ENCODE measurements at regions of chr6 and their contacts with region 1.

Region 1: DNA sequence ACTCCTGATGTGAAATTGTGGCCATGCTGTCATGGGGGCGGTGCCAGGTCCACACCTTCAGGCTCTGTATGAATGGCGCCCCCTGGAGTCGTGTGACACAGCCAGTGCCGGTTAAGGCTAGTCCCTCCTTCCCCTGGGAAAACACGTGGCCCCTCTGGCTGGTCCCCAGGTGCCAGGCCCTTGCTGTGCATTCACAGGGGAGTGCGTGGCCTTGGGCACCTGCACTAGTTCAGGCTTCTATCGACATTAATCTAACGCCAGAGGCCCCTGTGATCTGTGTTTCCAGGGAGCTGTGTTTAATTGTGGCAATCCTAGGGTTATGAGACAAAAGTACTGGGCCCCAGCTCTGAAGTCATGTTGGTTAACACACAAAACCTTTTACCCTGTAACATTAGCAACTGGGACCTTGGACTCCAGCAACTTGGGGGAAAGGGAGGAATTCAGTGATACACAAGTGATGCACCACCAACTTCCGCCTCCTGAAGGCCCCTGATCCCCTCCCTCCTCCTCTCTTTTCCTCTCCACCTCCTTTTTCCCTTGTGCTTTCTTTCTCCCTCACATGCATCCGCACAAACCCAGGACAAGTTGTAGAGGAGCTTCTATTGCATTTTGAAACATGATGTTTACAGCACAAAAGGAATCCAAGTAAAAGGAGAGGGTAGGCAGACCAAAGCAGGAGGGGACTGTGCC is 74.0 kb downstream of the SSR1 start:
- DNase-seq: no peak
- ATAC-seq: peak; percentile 74
- H3K4me3 ChIP-seq: no peak overlapping the region
- H3K27ac ChIP-seq: peak overlapping the region; percentile 38
- H3K4me1 ChIP-seq: peaks cover 71% of the 10 kb centered on the region
- H3K27me3 ChIP-seq: no peaks in the 10 kb centered on the region
- CTCF ChIP-seq: peak; percentile 71 to 87 (median 79)
- EP300 ChIP-seq: no peak
- POLR2A ChIP-seq: peak; percentile 41; the same call in 1 of the 2 replicates
- RAD21 ChIP-seq: peak; percentile 56

Region 2: GRCh38 chr6:6676910-6677441 is 562.1 kb before region 1 on chr6:
- CTCF ChIA-PET with region 1: interaction called, 36 read pairs
- POLR2A ChIA-PET with region 1: no interaction called
- RAD21 ChIA-PET with region 1: interaction called, 33 read pairs
- SMC1A ChIA-PET with region 1: interaction called, 33 read pairs
- in situ Hi-C with region 1: loop called (anchors 5 kb)
- intact Hi-C with region 1: loop called (anchors 2 kb)
- DNase-seq: peak; percentile 66
- ATAC-seq: peak; percentile 94
- H3K4me3 ChIP-seq: no peak overlapping the region
- H3K27ac ChIP-seq: 0 out of 2 replicates have a peak overlapping the region, but pooled peaks have one; percentile 20
- H3K4me1 ChIP-seq: peaks cover 8% of the 10 kb centered on the region
- H3K27me3 ChIP-seq: no peaks in the 10 kb centered on the region
- CTCF ChIP-seq: peak; percentile 91 to 97 (median 95); a peak in 5 of 6 replicates
- EP300 ChIP-seq: no peak
- POLR2A ChIP-seq: no peak
- RAD21 ChIP-seq: peak; percentile 96

Region 3: DNA sequence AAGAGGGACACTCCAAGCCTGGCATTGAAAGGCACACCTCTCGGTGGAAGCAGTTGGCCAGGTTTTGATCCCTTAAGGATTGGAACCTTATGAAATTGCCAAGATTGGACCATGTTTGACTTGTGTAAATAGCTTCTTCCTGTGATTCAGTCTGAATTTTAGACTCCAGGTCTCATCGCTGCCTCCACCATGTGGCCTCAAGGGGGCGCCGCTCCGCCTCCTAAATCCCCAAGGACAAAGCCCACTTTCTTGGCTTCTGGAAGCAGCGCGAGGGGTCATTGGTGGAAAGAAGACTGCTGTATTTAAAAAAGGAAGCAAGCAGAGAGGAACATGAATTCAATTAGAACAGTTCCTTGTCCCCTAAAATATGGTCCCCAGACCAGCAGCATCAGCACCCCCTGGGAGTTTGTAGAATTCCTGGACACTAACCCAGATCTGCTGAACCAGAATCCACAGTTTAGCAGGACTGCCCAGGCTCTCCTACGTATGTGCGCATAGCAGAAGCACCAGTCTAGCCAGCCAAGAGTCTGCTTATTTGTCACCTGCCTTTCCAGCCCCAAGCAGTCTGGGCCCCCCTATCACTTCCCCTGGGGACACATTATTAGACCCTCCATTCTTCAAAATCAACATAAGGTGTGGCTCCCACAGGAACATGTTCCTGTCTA is 542.0 kb before region 1 on chr6:
- CTCF ChIA-PET with region 1: interaction called, 16 read pairs
- POLR2A ChIA-PET with region 1: no interaction called
- RAD21 ChIA-PET with region 1: interaction called, 8 read pairs
- SMC1A ChIA-PET with region 1: interaction called, 4 read pairs
- in situ Hi-C with region 1: no loop called
- intact Hi-C with region 1: no loop called
- DNase-seq: no peak
- ATAC-seq: peak; percentile 71
- H3K4me3 ChIP-seq: no peak overlapping the region
- H3K27ac ChIP-seq: no peak overlapping the region
- H3K4me1 ChIP-seq: no peaks in the 10 kb centered on the region
- H3K27me3 ChIP-seq: no peaks in the 10 kb centered on the region; a peak in 1 of 4 replicates
- CTCF ChIP-seq: peak; percentile 53 to 80 (median 66)
- EP300 ChIP-seq: no peak
- POLR2A ChIP-seq: no peak
- RAD21 ChIP-seq: peak; percentile 75

Region 4: GRCh38 chr6:6758915-6759654 is 480.0 kb before region 1 on chr6:
- CTCF ChIA-PET with region 1: interaction called, 36 read pairs
- POLR2A ChIA-PET with region 1: no interaction called
- RAD21 ChIA-PET with region 1: interaction called, 10 read pairs
- SMC1A ChIA-PET with region 1: interaction called, 14 read pairs
- in situ Hi-C with region 1: no loop called
- intact Hi-C with region 1: no loop called
- DNase-seq: peak; percentile 13
- ATAC-seq: peak; percentile 97
- H3K4me3 ChIP-seq: no peak overlapping the region
- H3K27ac ChIP-seq: no peak overlapping the region
- H3K4me1 ChIP-seq: peaks cover 7% of the 10 kb centered on the region
- H3K27me3 ChIP-seq: no peaks in the 10 kb centered on the region
- CTCF ChIP-seq: peak; percentile 55 to 65 (median 57)
- EP300 ChIP-seq: 0 out of 4 replicates have a peak, but pooled peaks of 1 of the 2 experiments have one; percentile 29
- POLR2A ChIP-seq: no peak
- RAD21 ChIP-seq: peak; percentile 70

Region 5: DNA sequence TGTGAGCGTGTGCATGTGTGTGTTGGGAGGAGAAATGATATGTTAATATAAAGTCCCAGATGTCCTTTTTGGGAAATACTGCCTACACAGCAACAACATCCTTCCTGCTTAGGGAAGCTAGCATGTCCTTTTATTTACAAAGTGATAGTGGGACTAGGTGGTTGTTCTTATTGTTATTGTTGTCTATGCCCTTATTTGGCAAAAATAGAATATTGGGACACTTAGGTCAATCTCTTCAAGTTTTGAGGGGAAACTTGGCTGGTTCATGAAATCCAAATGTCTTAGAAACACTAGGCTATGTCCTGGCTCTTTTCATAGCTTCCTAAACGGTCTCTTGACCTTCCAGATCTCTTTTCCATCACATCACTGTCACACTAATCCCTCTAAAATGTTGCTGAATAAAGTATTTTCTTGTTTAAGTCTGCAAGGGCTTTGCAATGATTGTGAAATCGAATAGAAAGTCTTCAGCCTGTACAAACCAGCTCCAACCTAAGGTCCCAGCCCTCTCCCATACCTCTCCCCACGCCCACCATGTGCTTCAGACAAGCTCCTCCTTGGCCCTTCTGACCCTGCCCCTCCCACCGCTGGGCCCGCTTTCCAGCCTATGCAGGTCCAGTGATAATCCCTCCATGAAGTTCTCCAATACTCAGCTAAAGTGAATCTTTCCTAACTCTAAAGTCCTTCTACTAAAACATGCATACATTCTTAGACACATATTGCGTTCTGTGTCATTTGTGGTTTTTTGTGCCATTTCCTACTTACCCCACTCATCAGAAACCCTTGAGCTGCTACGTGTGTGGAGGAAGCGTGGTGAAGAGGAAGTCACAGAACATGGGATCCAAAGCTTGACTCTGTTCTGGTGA is 445.4 kb before region 1 on chr6:
- CTCF ChIA-PET with region 1: interaction called, 7 read pairs
- POLR2A ChIA-PET with region 1: interaction called, 6 read pairs
- RAD21 ChIA-PET with region 1: interaction called, 6 read pairs
- SMC1A ChIA-PET with region 1: interaction called, 5 read pairs
- in situ Hi-C with region 1: no loop called
- intact Hi-C with region 1: loop called (anchors 5 kb)
- DNase-seq: no peak
- ATAC-seq: no peak
- H3K4me3 ChIP-seq: no peak overlapping the region
- H3K27ac ChIP-seq: no peak overlapping the region
- H3K4me1 ChIP-seq: peaks cover 28% of the 10 kb centered on the region
- H3K27me3 ChIP-seq: no peaks in the 10 kb centered on the region
- CTCF ChIP-seq: no peak
- EP300 ChIP-seq: no peak
- POLR2A ChIP-seq: no peak
- RAD21 ChIP-seq: no peak

Region 6: GRCh38 chr6:7107578-7108195 is 131.4 kb before region 1 on chr6 and contains the start of gene RREB1:
- CTCF ChIA-PET with region 1: interaction called, 10 read pairs
- POLR2A ChIA-PET with region 1: interaction called, 3 read pairs
- RAD21 ChIA-PET with region 1: interaction called, 7 read pairs
- SMC1A ChIA-PET with region 1: interaction called, 5 read pairs
- in situ Hi-C with region 1: no loop called
- intact Hi-C with region 1: loop called (anchors 5 kb)
- DNase-seq: no peak
- ATAC-seq: peak; percentile 76
- H3K4me3 ChIP-seq: peak within 1 kb of the TSS; percentile 97
- H3K27ac ChIP-seq: peak within 1 kb of the TSS; percentile 94
- H3K4me1 ChIP-seq: peaks cover 5% of the 10 kb centered on the region
- H3K27me3 ChIP-seq: no peaks in the 10 kb centered on the region
- CTCF ChIP-seq: no peak
- EP300 ChIP-seq: no peak
- POLR2A ChIP-seq: peak; percentile 33
- RAD21 ChIP-seq: peak; percentile 1; the same call in 1 of the 2 replicates
- polyA plus RNA-seq, gene RREB1: 1.9 to 2.1 TPM

Region 7: GRCh38 chr6:7154341-7155139 is 84.5 kb before region 1 on chr6:
- CTCF ChIA-PET with region 1: interaction called, 13 read pairs
- POLR2A ChIA-PET with region 1: interaction called, 4 read pairs
- RAD21 ChIA-PET with region 1: interaction called, 11 read pairs
- SMC1A ChIA-PET with region 1: interaction called, 25 read pairs
- in situ Hi-C with region 1: no loop called
- intact Hi-C with region 1: loop called (anchors 5 kb)
- DNase-seq: peak; percentile 80
- ATAC-seq: peak; percentile 84
- H3K4me3 ChIP-seq: peak overlapping the region; percentile 58; the same call in 1 of the 2 replicates
- H3K27ac ChIP-seq: peak overlapping the region; percentile 93
- H3K4me1 ChIP-seq: peaks cover 80% of the 10 kb centered on the region
- H3K27me3 ChIP-seq: no peaks in the 10 kb centered on the region
- CTCF ChIP-seq: no peak
- EP300 ChIP-seq: peak; percentile 88 to 92; a peak in 3 of 4 replicates
- POLR2A ChIP-seq: peak; percentile 51; the same call in 1 of the 2 replicates
- RAD21 ChIP-seq: no peak

Region 8: DNA sequence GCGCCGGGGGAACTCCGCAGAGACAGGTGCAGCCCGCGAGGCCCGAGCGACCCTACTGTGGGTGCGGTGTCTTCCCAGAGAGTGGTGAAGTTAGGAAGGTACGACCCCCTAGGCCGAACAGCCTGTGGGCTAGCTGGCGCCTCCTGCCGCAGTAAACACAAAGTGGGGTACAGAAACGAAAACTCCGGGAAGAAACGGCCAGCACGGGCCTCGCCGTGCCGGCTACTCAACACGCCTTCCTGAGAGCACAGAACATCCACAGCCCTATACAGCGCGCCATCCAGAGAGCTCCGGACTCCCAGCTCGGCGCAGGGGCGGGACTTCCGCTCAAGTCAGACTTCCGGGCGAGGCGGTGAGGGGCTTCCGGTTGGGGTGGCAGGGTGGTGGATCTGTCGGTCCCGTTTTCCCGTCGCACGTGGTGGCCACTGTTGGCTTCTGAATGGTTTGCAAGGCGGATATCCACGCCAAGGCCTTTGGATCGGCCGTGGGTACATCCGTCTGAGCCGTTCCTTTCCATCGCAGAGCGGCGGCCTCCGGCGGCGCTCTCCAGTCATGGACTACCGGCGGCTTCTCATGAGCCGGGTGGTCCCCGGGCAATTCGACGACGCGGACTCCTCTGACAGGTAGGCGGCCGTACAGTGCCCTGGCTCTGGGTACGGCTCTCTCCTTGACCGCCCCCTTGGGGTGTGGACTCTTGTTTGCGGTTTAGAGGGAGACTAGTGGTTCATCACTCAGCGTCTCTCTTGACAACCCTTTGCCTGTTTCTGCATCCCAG is 150.6 kb after region 1 on chr6 and contains the starts of genes CAGE1 and RIOK1:
- CTCF ChIA-PET with region 1: no interaction called
- POLR2A ChIA-PET with region 1: no interaction called
- RAD21 ChIA-PET with region 1: no interaction called
- SMC1A ChIA-PET with region 1: no interaction called
- in situ Hi-C with region 1: no loop called
- intact Hi-C with region 1: no loop called
- DNase-seq: peak; percentile 74
- ATAC-seq: peak; percentile 96
- H3K4me3 ChIP-seq: peak within 1 kb of the TSS; percentile 89
- H3K27ac ChIP-seq: peak within 1 kb of the TSS; percentile 89
- H3K4me1 ChIP-seq: no peaks in the 10 kb centered on the region; the same call in 1 of the 2 replicates
- H3K27me3 ChIP-seq: no peaks in the 10 kb centered on the region
- CTCF ChIP-seq: no peak
- EP300 ChIP-seq: peak in 1 of 2 experiments; percentile 30; a peak in 1 of 4 replicates
- POLR2A ChIP-seq: peak; percentile 97
- RAD21 ChIP-seq: no peak
- polyA plus RNA-seq, gene CAGE1: 0.05 TPM in 1 of 2 experiments, not detected in the other
- polyA plus RNA-seq, gene RIOK1: 31.0 to 40.2 TPM

Region 9: GRCh38 chr6:7526755-7527154 is 287.7 kb after region 1 on chr6:
- CTCF ChIA-PET with region 1: no interaction called
- POLR2A ChIA-PET with region 1: no interaction called
- RAD21 ChIA-PET with region 1: no interaction called
- SMC1A ChIA-PET with region 1: no interaction called
- in situ Hi-C with region 1: no loop called
- intact Hi-C with region 1: no loop called
- DNase-seq: no peak
- ATAC-seq: no peak
- H3K4me3 ChIP-seq: no peak overlapping the region
- H3K27ac ChIP-seq: no peak overlapping the region
- H3K4me1 ChIP-seq: no peaks in the 10 kb centered on the region
- H3K27me3 ChIP-seq: no peaks in the 10 kb centered on the region; a peak in 1 of 4 replicates
- CTCF ChIP-seq: no peak
- EP300 ChIP-seq: no peak
- POLR2A ChIP-seq: no peak
- RAD21 ChIP-seq: no peak

Measured in GM12878 (cell line).